SK-N-SH (cell line): ENCODE measurements at regions of chr14 and their contacts with region 1.

Region 1: DNA sequence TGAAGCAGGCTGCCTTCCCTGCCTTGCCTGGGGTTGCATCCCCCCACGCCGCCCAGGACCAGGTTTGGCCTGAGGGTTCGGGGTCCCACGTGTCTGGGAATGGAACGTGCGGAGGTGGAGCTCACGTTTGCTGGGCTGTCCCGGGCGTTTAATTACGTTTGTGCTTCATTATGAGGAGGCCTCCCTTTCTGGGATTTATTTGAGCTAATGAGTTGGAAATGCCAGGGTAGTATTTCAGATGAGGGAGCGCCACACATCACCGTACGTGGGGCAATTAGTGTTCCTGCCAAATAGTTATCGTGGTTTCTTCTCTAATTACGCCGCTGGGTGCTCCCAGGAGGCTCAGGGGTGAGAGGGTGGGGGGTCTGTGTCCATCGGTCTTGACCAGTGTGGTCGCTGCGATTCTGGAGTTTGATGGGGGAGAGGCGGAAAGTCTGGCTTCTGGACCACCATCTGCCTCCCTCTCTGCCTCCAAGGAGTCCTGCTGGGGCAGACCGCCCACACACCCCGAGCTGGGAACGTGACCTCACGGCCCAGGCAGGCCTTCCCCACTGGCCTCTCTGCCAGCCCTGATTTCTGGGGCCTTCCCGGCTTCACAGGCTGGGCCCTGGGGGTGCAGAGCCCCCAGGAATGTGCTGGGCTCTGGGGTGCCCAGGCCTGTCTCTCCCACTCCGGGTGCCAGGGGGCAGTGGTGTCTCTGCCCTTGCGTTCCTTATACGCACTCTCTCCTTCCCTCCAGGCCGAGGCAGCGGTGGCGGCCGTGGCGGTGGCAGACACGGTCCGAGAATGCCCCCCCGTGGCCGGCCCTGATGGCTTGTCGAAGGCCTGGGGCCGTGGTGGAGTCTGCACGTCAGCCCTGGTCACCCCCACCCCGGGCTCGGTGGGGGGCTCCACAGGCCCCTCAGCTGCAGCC is 18.9 kb downstream of the KIF26A start:
- DNase-seq: peak; percentile 81
- H3K4me3 ChIP-seq: no peak overlapping the region
- H3K27ac ChIP-seq: peak overlapping the region in 1 of 2 experiments; percentile 96; a peak in 2 of 4 replicates
- H3K4me1 ChIP-seq: peaks cover 0 to 92% of the 10 kb centered on the region in 2 experiments; a peak in 1 of 4 replicates
- H3K27me3 ChIP-seq: no peaks in the 10 kb centered on the region
- CTCF ChIP-seq: peak; percentile 16
- EP300 ChIP-seq: no peak
- RAD21 ChIP-seq: peak; percentile 50

Region 2: DNA sequence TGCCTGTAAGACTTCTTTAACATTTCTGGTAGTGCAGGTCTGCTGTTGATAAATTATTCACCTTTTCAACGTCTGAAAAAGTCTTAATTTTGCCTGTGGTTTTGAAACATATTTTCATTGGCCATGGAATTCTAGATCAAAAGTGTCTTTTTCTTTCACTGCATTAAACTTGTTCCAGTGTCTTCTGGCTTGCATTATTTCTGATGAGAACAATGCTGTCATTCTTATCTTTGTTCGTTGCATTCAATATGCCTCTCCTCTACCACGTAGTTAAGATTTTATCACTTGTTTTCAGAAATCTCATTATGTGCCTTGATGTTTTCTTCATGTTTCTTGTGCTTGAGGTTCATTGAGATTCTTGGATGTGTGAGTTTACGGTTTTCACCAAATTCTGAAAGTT is 32.3 kb before region 1 on chr14:
- CTCF ChIA-PET with region 1: no interaction called
- POLR2A ChIA-PET with region 1: no interaction called
- DNase-seq: no peak
- H3K4me3 ChIP-seq: no peak overlapping the region
- H3K27ac ChIP-seq: no peak overlapping the region
- H3K4me1 ChIP-seq: no peaks in the 10 kb centered on the region
- H3K27me3 ChIP-seq: no peaks in the 10 kb centered on the region
- CTCF ChIP-seq: no peak
- EP300 ChIP-seq: no peak
- RAD21 ChIP-seq: no peak

Region 3: DNA sequence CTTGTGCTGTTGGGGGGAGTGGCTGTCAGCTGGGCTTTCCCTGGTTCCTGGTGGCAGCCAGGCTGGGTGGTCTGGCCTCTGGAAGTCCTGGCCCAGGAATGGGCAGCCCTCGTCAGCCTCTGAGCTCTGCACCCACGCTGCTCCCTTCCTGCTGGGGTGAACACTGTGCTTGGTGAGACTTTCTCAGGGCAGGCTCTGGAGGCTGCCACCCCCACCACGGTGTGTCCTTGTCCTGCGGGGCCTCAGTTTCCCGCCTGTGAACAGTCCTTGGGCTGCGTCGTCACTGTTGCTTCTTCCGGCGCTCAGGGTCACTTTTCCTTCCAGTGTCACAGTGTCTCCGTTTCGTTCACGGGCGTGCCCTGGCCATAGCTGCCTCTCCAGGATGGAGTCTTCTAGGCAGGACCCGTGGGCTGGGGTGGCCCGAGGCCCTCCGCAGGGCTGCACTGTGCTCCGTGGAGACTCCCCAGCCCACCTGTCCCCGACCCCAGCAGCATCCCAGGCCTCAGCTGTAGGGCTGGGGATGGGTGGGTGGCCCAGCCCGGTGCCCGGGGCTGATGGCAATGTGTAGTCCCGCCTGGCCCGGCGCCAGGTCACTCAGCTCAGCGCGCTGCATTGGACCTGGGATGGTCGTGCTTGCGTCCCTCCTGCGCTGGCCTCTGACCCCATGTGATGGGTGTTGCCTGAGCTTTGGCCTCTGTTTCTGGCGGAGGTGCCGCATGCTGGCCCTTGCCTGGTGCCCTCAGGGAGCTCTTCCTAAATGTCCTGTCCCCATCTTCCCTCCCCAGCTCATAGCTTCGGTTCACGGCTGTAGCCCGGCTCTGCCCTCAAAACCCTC is 12.1 kb before region 1 on chr14:
- CTCF ChIA-PET with region 1: interaction called, 26 read pairs
- POLR2A ChIA-PET with region 1: interaction called, 8 read pairs
- DNase-seq: peak; percentile 80
- H3K4me3 ChIP-seq: no peak overlapping the region
- H3K27ac ChIP-seq: peak overlapping the region in 1 of 2 experiments; percentile 99; a peak in 1 of 4 replicates
- H3K4me1 ChIP-seq: peaks cover 10 to 97% of the 10 kb centered on the region in 2 experiments; a peak in 2 of 4 replicates
- H3K27me3 ChIP-seq: no peaks in the 10 kb centered on the region
- CTCF ChIP-seq: no peak
- EP300 ChIP-seq: no peak
- RAD21 ChIP-seq: no peak

Region 4: GRCh38 chr14:104175041-104175440 is 17.8 kb after region 1 on chr14:
- CTCF ChIA-PET with region 1: interaction called, 10 read pairs
- POLR2A ChIA-PET with region 1: no interaction called
- DNase-seq: no peak
- H3K4me3 ChIP-seq: no peak overlapping the region
- H3K27ac ChIP-seq: no peak overlapping the region
- H3K4me1 ChIP-seq: peaks cover 0 to 8% of the 10 kb centered on the region in 2 experiments; a peak in 1 of 4 replicates
- H3K27me3 ChIP-seq: no peaks in the 10 kb centered on the region
- CTCF ChIP-seq: no peak
- EP300 ChIP-seq: no peak
- RAD21 ChIP-seq: no peak

Region 5: GRCh38 chr14:104262515-104263514 is 105.5 kb after region 1 on chr14:
- CTCF ChIA-PET with region 1: no interaction called
- POLR2A ChIA-PET with region 1: no interaction called
- DNase-seq: no peak
- H3K4me3 ChIP-seq: no peak overlapping the region
- H3K27ac ChIP-seq: no peak overlapping the region
- H3K4me1 ChIP-seq: no peaks in the 10 kb centered on the region; a peak in 1 of 4 replicates
- H3K27me3 ChIP-seq: no peaks in the 10 kb centered on the region
- CTCF ChIP-seq: no peak
- EP300 ChIP-seq: no peak
- RAD21 ChIP-seq: no peak